ENCODE measurements at regions of chr2 and their contacts with region 1.

Region 1: DNA sequence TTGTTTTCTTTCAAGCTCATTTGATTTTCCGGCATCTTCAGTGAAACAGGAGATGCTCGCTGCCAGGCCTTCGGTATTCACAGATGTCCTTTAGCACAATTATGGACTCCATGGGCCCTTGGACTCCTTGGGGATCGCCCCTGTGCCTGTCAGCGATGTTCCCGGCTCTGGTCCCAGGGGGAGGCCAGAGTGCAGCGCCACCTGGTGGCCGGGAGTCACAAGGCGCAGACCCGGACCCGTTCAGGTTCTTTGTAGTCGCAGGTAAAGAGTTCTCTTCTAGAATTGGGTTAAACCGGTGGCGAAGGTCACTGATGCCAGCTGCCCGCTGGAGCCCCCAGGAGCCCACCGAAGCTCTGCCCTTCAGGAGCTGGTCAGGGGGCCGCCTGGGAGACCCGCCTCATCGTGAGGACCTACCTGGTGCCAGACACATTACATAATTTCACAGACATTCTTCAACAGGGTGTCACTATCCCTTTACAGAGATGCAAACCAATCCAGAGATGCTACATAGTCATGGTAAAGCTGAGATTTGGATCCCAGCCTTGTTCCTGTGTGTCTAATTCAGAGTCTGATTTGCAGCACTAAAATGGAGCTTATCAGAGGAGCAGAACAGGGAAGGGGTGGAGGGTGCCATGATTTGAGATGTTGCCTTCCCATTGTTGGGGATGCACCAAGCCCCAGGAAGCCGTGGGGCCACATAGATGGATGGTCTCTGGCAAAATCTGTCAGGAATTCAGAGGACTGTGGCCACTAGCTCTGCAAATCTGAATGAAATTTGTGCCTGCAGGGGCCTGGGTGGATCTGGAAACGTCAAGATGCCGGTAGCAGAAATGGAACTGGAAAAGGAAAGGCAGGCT is 6.0 kb upstream of the INPP5D start:
- DNase-seq: peak; percentile 76
- ATAC-seq: peak; percentile 81
- H3K4me3 ChIP-seq: no peak overlapping the region
- H3K4me3 Mint-ChIP-seq: peak overlapping the region; percentile 6
- H3K27ac ChIP-seq: no peak overlapping the region
- H3K27ac Mint-ChIP-seq: peak overlapping the region; percentile 56
- H3K4me1 ChIP-seq: peaks cover 9 to 14% of the 10 kb centered on the region in 2 donors
- H3K4me1 Mint-ChIP-seq: peaks cover 18% of the 10 kb centered on the region
- H3K27me3 ChIP-seq: no peaks in the 10 kb centered on the region
- H3K27me3 Mint-ChIP-seq: no peaks in the 10 kb centered on the region
- CTCF ChIP-seq: peak; percentile 95

Region 2: DNA sequence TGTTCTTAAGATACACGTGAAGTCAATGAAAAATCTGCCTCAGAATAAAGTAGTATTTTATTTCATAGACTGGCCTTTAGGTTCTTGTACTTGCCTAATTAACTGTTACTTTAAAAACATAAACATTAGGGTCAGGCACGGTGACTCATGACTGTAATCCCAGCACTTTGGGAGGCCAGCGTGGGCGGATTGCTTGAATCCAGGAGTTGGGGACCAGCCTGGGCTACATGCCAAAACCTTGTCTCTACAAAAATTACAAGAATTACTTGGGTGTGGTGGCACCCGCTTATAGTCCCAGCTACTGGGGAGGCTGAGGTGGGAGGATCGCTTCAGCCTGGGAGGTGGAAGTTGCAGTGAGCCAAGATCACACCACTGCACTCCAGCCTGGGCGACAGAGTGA is 200.1 kb before region 1 on chr2:
- CTCF ChIA-PET with region 1: interaction called, 38 read pairs
- POLR2A ChIA-PET with region 1: no interaction called
- intact Hi-C with region 1: loop called (anchors 5 kb)
- DNase-seq: no peak
- ATAC-seq: no peak
- H3K4me3 ChIP-seq: no peak overlapping the region
- H3K4me3 Mint-ChIP-seq: no peak overlapping the region
- H3K27ac ChIP-seq: no peak overlapping the region
- H3K27ac Mint-ChIP-seq: no peak overlapping the region
- H3K4me1 ChIP-seq: no peaks in the 10 kb centered on the region
- H3K4me1 Mint-ChIP-seq: no peaks in the 10 kb centered on the region
- H3K27me3 ChIP-seq: no peaks in the 10 kb centered on the region
- H3K27me3 Mint-ChIP-seq: no peaks in the 10 kb centered on the region
- CTCF ChIP-seq: no peak

Region 3: DNA sequence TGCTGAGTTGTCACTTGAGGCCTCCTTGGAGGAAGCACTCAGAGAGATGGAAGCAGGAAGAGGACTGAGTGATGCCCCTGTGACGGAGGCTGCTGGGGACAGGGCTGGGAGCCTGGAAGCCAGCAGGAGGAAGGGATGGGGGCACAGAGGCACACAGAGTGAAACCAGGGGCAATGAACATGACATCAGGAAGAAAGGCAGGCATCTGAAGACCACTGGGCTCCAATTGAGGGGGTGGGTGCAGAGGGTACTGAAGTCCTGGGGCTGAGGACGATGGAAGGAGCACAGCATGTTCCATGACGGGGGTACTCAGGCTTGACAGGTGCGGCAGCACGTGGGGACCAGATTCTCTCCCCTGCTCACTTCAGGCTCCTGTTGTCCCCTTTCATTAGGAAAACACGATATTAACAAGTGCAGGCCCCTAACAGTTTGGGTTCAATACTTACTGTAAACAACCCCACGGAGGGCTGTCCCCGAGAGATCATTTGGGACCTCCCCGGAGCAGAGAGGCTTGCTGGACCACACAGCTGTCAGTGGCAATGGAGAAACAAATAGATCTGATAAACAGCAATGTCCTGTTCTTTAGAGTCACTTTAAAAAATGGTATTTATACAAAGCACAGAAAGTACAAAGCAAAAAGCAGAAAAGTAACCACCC is 14.7 kb after region 1 on chr2:
- CTCF ChIA-PET with region 1: interaction called, 20 read pairs
- POLR2A ChIA-PET with region 1: no interaction called
- intact Hi-C with region 1: no loop called
- DNase-seq: no peak
- ATAC-seq: peak; percentile 44
- H3K4me3 ChIP-seq: peak overlapping the region in 2 of 5 experiments; percentile 25 to 47
- H3K4me3 Mint-ChIP-seq: peak overlapping the region; percentile 82
- H3K27ac ChIP-seq: peak overlapping the region; percentile 42 to 75
- H3K27ac Mint-ChIP-seq: peak overlapping the region; percentile 79
- H3K4me1 ChIP-seq: peaks cover 77 to 86% of the 10 kb centered on the region in 2 donors
- H3K4me1 Mint-ChIP-seq: peaks cover 70% of the 10 kb centered on the region
- H3K27me3 ChIP-seq: no peaks in the 10 kb centered on the region
- H3K27me3 Mint-ChIP-seq: no peaks in the 10 kb centered on the region
- CTCF ChIP-seq: no peak

Region 4: GRCh38 chr2:233100192-233100998 is 46.2 kb after region 1 on chr2:
- CTCF ChIA-PET with region 1: interaction called, 30 read pairs
- POLR2A ChIA-PET with region 1: interaction called, 69 read pairs
- intact Hi-C with region 1: no loop called
- DNase-seq: peak; percentile 93
- ATAC-seq: peak; percentile 86
- H3K4me3 ChIP-seq: peak overlapping the region in 4 of 5 experiments; percentile 18 to 55 (median 40)
- H3K4me3 Mint-ChIP-seq: peak overlapping the region; percentile 83
- H3K27ac ChIP-seq: peak overlapping the region; percentile 96 to 98
- H3K27ac Mint-ChIP-seq: peak overlapping the region; percentile 97
- H3K4me1 ChIP-seq: peaks cover 79 to 83% of the 10 kb centered on the region in 2 donors
- H3K4me1 Mint-ChIP-seq: peaks cover 80% of the 10 kb centered on the region
- H3K27me3 ChIP-seq: no peaks in the 10 kb centered on the region
- H3K27me3 Mint-ChIP-seq: no peaks in the 10 kb centered on the region
- CTCF ChIP-seq: no peak

Region 5: DNA sequence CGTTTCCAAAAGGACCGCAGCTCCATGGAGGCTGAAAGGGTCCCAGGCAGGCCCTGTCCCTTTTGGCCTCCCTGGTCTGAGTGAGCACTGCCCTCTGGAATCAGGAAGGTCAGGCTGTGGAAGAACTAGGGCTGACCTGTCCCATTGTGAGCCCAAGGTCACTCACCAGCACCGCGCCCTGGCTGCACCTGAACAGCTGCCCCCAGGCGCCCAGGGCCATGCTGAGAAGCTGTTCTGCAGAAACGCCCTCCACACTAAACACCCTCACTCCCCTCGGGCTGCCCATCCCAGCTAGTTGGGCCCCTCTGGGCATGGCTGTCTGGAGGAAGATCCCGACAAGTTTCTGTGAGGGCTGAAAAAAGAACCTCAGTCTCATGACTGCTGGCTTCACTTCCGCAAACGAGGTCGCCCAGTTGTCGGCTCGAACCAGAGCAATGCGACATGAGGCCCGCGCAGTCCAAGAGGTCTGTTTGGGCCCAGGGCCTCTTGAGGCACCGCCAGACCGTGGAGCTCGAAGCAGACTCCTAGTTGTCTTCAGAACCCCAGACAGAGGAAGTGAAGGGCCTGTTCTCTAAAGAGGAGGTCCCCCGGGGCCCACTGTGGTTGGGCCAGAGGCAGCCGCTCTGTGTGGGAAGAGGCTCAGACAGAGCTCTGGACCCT is 70.4 kb after region 1 on chr2:
- CTCF ChIA-PET with region 1: interaction called, 26 read pairs
- POLR2A ChIA-PET with region 1: interaction called, 38 read pairs
- intact Hi-C with region 1: no loop called
- DNase-seq: peak; percentile 93
- ATAC-seq: peak; percentile 98
- H3K4me3 ChIP-seq: peak overlapping the region in 1 of 5 experiments; percentile 24
- H3K4me3 Mint-ChIP-seq: peak overlapping the region; percentile 82
- H3K27ac ChIP-seq: peak overlapping the region; percentile 80 to 97
- H3K27ac Mint-ChIP-seq: peak overlapping the region; percentile 95
- H3K4me1 ChIP-seq: peaks cover 35 to 50% of the 10 kb centered on the region in 2 donors
- H3K4me1 Mint-ChIP-seq: peaks cover 50% of the 10 kb centered on the region
- H3K27me3 ChIP-seq: no peaks in the 10 kb centered on the region
- H3K27me3 Mint-ChIP-seq: no peaks in the 10 kb centered on the region
- CTCF ChIP-seq: no peak

Measured in B cell (primary cell).